Caco-2 (cell line): ENCODE measurements at regions of chr7 and their contacts with region 1.

Region 1: GRCh38 chr7:25093268-25093826 is 31.7 kb downstream of the CYCS start:
- DNase-seq: peak; percentile 84 to 89
- H3K4me3 ChIP-seq: no peak overlapping the region
- H3K4me3 Mint-ChIP-seq: no peak overlapping the region
- H3K27ac Mint-ChIP-seq: no peak overlapping the region
- H3K4me1 ChIP-seq: no peaks in the 10 kb centered on the region
- H3K4me1 Mint-ChIP-seq: peaks cover 25% of the 10 kb centered on the region
- H3K27me3 ChIP-seq: no peaks in the 10 kb centered on the region
- H3K27me3 Mint-ChIP-seq: peaks cover 3% of the 10 kb centered on the region
- CTCF ChIP-seq: peak; percentile 90 to 93

Region 2: GRCh38 chr7:24882989-24883621 is 210.2 kb before region 1 on chr7:
- CTCF ChIA-PET with region 1: interaction called, 4 read pairs
- POLR2A ChIA-PET with region 1: no interaction called
- intact Hi-C with region 1: loop called (anchors 5 kb)
- DNase-seq: no peak
- H3K4me3 ChIP-seq: no peak overlapping the region
- H3K4me3 Mint-ChIP-seq: no peak overlapping the region
- H3K27ac Mint-ChIP-seq: peak overlapping the region; percentile 54
- H3K4me1 ChIP-seq: no peaks in the 10 kb centered on the region
- H3K4me1 Mint-ChIP-seq: peaks cover 7% of the 10 kb centered on the region
- H3K27me3 ChIP-seq: no peaks in the 10 kb centered on the region
- H3K27me3 Mint-ChIP-seq: no peaks in the 10 kb centered on the region
- CTCF ChIP-seq: no peak

Region 3: GRCh38 chr7:24896031-24896501 is 197.3 kb before region 1 on chr7:
- CTCF ChIA-PET with region 1: no interaction called
- POLR2A ChIA-PET with region 1: no interaction called
- intact Hi-C with region 1: loop called (anchors 1 kb)
- DNase-seq: no peak
- H3K4me3 ChIP-seq: no peak overlapping the region
- H3K4me3 Mint-ChIP-seq: no peak overlapping the region
- H3K27ac Mint-ChIP-seq: no peak overlapping the region
- H3K4me1 ChIP-seq: peaks cover under 1% of the 10 kb centered on the region; the same call in 1 of the 2 replicates
- H3K4me1 Mint-ChIP-seq: no peaks in the 10 kb centered on the region
- H3K27me3 ChIP-seq: no peaks in the 10 kb centered on the region
- H3K27me3 Mint-ChIP-seq: no peaks in the 10 kb centered on the region
- CTCF ChIP-seq: no peak

Region 4: DNA sequence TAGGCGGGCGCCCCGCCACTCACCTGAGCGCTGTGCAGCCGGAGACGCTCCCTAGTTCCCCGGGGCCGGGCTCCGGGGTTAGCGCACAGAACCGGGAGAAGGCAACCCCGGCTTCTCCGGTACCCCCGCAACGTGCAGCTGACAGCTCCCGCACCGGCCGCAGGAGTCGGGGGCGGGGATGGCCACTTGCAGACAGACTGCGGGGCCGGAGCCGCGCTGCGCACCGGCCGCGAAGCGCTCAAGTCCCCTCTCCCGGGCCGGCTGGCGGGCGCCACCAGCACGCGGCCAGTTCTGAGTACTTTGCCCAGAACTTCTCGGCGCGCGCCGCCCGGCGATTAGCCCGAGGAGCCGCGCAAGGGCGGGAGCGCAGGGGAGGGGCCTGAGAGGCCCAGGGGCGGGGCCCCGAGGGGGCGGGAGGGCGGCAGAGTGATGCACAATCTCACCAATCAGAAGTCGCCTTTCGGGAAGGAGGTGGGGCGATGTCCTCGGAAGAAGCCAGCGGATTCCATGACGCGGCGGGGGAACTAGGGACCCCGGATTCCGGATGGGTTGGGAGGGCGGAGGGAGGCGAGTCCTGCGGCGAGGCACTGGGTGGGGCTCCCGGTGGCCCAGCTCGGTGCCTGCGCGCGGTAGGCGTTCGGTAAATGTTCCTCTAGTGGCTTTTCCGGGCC is 113.3 kb before region 1 on chr7 and contains the start of gene OSBPL3:
- CTCF ChIA-PET with region 1: interaction called, 10 read pairs
- POLR2A ChIA-PET with region 1: no interaction called
- intact Hi-C with region 1: loop called (anchors 1 kb)
- DNase-seq: peak; percentile 97
- H3K4me3 ChIP-seq: peak within 1 kb of the TSS; percentile 78
- H3K4me3 Mint-ChIP-seq: peak within 1 kb of the TSS; percentile 85
- H3K27ac Mint-ChIP-seq: peak within 1 kb of the TSS; percentile 96
- H3K4me1 ChIP-seq: peaks cover 23% of the 10 kb centered on the region
- H3K4me1 Mint-ChIP-seq: peaks cover 13% of the 10 kb centered on the region
- H3K27me3 ChIP-seq: no peaks in the 10 kb centered on the region
- H3K27me3 Mint-ChIP-seq: no peaks in the 10 kb centered on the region
- CTCF ChIP-seq: no peak
- total RNA-seq, gene OSBPL3: 43.9 and 45.1 TPM in 2 replicates

Region 5: DNA sequence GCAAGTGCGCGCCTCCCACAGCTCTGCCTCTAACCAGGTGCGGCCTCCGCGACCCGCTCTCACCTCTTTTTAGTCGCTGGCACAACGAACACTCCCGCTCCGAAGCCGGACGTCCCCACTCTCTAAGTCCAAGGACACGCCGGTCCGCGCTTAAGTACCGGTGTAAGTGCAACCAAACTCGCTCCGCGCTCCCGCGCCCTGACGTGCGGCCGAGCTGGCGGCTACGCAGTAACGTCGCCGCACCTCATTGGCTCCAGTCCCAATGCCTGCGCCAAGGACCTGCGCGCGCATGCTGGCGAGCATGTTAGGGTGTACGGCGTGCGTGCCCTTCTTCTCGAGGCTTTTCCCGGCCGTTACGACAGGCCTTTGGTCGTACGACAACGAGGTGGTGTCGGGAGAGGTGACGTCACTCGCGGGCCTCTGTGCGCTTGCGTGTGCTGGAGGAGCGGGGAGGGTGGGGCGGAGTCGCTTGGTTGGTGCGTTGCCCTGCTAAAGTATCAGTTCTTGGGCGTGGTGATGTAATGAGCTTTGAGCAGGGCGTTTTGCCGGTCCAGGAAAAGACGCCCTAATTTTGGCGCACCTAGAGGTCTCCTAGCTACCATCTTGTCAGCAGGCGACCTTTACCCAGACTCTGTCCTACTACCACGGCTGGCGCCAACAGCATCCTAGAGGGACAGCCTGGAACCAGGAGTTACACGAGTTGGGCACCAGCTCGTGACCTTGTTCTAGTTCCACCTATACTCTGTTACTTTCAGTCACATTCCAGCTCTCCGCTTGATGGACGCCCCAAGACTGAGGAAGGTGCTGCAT is 32.0 kb after region 1 on chr7 and contains the start of gene CYCS:
- CTCF ChIA-PET with region 1: interaction called, 11 read pairs
- POLR2A ChIA-PET with region 1: interaction called, 7 read pairs
- intact Hi-C with region 1: no loop called
- DNase-seq: peak; percentile 99 to 100
- H3K4me3 ChIP-seq: peak within 1 kb of the TSS; percentile 77
- H3K4me3 Mint-ChIP-seq: peak within 1 kb of the TSS; percentile 88
- H3K27ac Mint-ChIP-seq: peak within 1 kb of the TSS; percentile 96
- H3K4me1 ChIP-seq: peaks cover 16% of the 10 kb centered on the region; the same call in 1 of the 2 replicates
- H3K4me1 Mint-ChIP-seq: peaks cover 19% of the 10 kb centered on the region
- H3K27me3 ChIP-seq: no peaks in the 10 kb centered on the region
- H3K27me3 Mint-ChIP-seq: no peaks in the 10 kb centered on the region
- CTCF ChIP-seq: peak in 1 of 2 experiments; percentile 2
- total RNA-seq, gene CYCS: 156 and 177 TPM in 2 replicates

Region 6: GRCh38 chr7:25167262-25167843 is 74.0 kb after region 1 on chr7:
- CTCF ChIA-PET with region 1: no interaction called
- POLR2A ChIA-PET with region 1: no interaction called
- intact Hi-C with region 1: loop called (anchors 10 kb)
- DNase-seq: no peak
- H3K4me3 ChIP-seq: no peak overlapping the region
- H3K4me3 Mint-ChIP-seq: no peak overlapping the region
- H3K27ac Mint-ChIP-seq: no peak overlapping the region
- H3K4me1 ChIP-seq: no peaks in the 10 kb centered on the region
- H3K4me1 Mint-ChIP-seq: no peaks in the 10 kb centered on the region
- H3K27me3 ChIP-seq: no peaks in the 10 kb centered on the region
- H3K27me3 Mint-ChIP-seq: no peaks in the 10 kb centered on the region
- CTCF ChIP-seq: no peak